Caco-2 (cell line): ENCODE measurements at regions of chr17 and their contacts with region 1.

Region 1: DNA sequence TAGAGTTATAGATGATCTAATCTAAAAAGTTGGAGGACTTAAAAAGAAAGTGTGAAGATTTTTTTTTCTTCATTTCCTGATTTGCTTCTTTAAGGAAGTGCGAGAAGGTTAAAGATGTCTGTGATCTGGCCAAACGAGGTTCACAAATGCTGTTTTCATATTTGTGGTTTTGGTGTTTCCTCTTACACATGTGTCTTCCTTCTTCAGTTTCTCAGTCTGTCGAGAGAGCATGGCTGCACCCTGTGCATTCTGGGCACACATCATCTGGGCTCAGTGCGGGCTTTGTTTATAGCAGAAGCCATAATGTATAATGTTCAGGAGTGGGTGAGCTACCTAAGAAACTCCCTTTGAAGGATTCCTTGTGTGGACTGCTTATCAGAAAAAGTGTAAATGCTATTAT is 260.4 kb upstream of the TBX2 start:
- DNase-seq: no peak
- H3K4me3 ChIP-seq: no peak overlapping the region
- H3K4me3 Mint-ChIP-seq: no peak overlapping the region
- H3K27ac Mint-ChIP-seq: no peak overlapping the region
- H3K4me1 ChIP-seq: no peaks in the 10 kb centered on the region
- H3K4me1 Mint-ChIP-seq: no peaks in the 10 kb centered on the region
- H3K27me3 ChIP-seq: no peaks in the 10 kb centered on the region
- H3K27me3 Mint-ChIP-seq: no peaks in the 10 kb centered on the region
- CTCF ChIP-seq: no peak

Region 2: DNA sequence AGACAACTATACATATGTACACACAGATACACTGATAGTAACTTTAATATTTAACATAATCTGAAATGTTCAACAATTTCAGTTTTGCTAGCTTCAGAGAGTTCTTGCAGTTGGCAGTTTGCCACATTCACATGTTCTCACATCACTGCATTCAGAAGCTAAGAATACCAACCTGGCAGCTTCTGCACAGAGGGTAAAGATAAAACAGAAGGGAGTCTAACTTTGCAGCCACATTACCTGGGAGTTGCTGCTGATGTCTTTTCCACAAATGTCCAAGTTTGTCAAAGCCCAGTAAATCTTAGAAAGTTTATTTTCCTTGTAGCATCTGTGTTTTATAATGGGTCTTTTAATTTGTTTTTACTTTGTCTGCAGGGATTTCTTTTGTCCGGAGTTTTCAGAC is 129.6 kb before region 1 on chr17:
- CTCF ChIA-PET with region 1: no interaction called
- POLR2A ChIA-PET with region 1: interaction called, 10 read pairs
- intact Hi-C with region 1: no loop called
- DNase-seq: no peak
- H3K4me3 ChIP-seq: no peak overlapping the region
- H3K4me3 Mint-ChIP-seq: no peak overlapping the region
- H3K27ac Mint-ChIP-seq: no peak overlapping the region
- H3K4me1 ChIP-seq: no peaks in the 10 kb centered on the region
- H3K4me1 Mint-ChIP-seq: peaks cover under 1% of the 10 kb centered on the region
- H3K27me3 ChIP-seq: no peaks in the 10 kb centered on the region
- H3K27me3 Mint-ChIP-seq: no peaks in the 10 kb centered on the region
- CTCF ChIP-seq: no peak